ENCODE measurements at regions of chr15 and their contacts with region 1.

Region 1: DNA sequence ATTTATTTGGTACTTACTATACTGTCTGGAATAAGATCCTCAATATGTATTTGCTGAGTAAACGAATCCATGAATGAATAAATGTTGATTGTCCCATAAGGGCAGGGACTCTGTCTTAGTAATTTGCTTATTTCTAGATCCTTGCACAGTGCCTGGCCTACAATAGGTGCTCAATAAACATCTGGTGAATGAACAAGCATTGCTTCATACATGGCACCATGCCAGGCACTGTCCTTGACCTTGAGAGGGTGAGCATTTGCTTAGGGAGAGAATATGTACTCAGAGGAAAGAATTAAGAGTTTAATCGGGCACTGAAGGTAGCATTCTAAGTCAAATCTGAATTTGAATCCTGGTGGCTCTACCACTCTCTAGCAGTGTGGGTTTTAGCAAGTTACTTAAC is 282.1 kb downstream of the THSD4 start:
- DNase-seq: no peak
- ATAC-seq: no peak
- H3K4me3 ChIP-seq: no peak overlapping the region
- H3K4me3 Mint-ChIP-seq: no peak overlapping the region
- H3K27ac ChIP-seq: no peak overlapping the region
- H3K27ac Mint-ChIP-seq: no peak overlapping the region
- H3K4me1 ChIP-seq: no peaks in the 10 kb centered on the region
- H3K4me1 Mint-ChIP-seq: no peaks in the 10 kb centered on the region
- H3K27me3 ChIP-seq: no peaks in the 10 kb centered on the region
- H3K27me3 Mint-ChIP-seq: peaks cover 15 to 24% of the 10 kb centered on the region in 2 donors
- CTCF ChIP-seq: no peak

Region 2: DNA sequence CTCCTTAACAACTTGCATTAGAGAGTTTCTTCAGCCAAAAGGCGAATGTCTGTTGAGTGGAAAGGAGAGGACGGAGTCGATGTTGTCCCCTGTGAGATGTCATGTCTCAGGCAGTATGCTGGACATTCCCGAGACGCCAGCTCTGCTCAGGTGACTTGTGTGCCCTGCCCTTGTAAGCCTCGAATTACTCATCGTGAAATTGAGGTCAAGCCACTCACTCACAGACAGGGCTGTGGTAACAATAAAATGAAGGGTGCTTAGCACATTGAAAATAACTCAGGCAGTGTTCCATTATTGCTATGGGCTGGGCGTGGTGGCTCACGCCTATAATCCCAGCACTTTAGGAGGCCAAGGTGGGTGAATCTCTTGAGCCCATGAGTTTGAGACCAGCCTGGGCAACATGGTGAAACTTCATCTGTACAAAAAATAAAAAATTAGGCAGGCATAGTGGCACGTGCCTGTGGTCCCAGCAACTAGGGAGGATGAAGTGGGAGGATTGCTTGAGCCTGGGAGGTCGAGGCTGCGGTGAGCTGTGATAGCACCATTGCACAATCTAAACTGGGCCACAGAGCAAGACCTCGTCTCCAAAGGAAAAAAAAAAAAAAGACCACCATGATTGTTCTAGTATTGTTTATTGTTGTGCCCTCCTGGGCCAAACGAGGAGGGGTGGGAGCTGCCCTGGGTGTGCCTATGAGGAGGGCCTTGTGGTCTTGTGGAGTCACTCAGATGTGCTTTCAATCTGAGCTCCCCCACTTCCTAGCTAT is 67.7 kb before region 1 on chr15:
- intact Hi-C with region 1: loop called (anchors 10 kb)
- DNase-seq: no peak
- ATAC-seq: no peak
- H3K4me3 ChIP-seq: no peak overlapping the region
- H3K4me3 Mint-ChIP-seq: no peak overlapping the region
- H3K27ac ChIP-seq: no peak overlapping the region
- H3K27ac Mint-ChIP-seq: no peak overlapping the region
- H3K4me1 ChIP-seq: no peaks in the 10 kb centered on the region
- H3K4me1 Mint-ChIP-seq: no peaks in the 10 kb centered on the region
- H3K27me3 ChIP-seq: no peaks in the 10 kb centered on the region
- H3K27me3 Mint-ChIP-seq: peaks cover 0 to 8% of the 10 kb centered on the region in 2 donors
- CTCF ChIP-seq: no peak

Measured in natural killer cell (primary cell).